Activated naive CD4-positive, alpha-beta T cell treated with anti-CD3 and anti-CD28 coated beads for 36 hours (primary cell): ENCODE measurements at regions of chr10 and their contacts with region 1.

Region 1: GRCh38 chr10:100481462-100482081 is 18.8 kb downstream of the WNT8B start:
- DNase-seq: peak; percentile 97
- H3K4me3 Mint-ChIP-seq: peak overlapping the region; percentile 73
- H3K27ac Mint-ChIP-seq: no peak overlapping the region
- H3K4me1 Mint-ChIP-seq: peaks cover 5% of the 10 kb centered on the region
- H3K27me3 Mint-ChIP-seq: peaks cover 9% of the 10 kb centered on the region

Region 2: DNA sequence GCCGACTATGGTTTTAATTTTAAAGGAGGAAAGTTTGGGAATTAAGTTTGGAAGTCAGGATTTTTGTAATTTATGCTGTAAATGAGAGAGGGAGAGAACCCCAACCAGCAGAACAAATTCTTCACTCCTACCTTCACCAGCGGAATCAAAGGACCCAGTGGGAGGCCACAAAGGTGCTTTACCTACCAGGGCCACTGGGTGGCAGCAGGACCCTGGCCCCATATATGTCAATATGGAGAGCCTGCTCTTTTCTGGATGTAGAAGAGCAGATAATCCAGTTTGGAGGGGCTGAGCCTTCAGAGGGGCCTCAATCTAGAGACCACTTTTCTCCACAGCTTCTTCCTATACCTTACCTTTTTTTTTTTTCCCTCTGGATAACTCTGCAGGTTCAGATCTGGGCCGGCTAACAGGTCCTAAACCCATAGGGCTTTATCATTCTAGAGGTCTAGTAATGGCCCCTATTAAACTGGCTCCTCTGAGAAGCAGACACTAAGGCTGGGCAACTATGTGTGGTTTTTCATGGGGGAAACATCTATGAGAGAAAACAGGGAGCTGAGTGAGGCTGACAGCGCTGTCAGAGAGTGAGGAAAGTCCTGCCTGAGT is 143.0 kb before region 1 on chr10:
- CTCF ChIA-PET with region 1: interaction called, 7 read pairs
- intact Hi-C with region 1: loop called (anchors 1 kb)
- DNase-seq: peak; percentile 91
- H3K4me3 Mint-ChIP-seq: no peak overlapping the region
- H3K27ac Mint-ChIP-seq: no peak overlapping the region
- H3K4me1 Mint-ChIP-seq: no peaks in the 10 kb centered on the region
- H3K27me3 Mint-ChIP-seq: no peaks in the 10 kb centered on the region

Region 3: GRCh38 chr10:100470367-100470766 is 11.2 kb before region 1 on chr10:
- CTCF ChIA-PET with region 1: interaction called, 20 read pairs
- intact Hi-C with region 1: no loop called
- DNase-seq: no peak
- H3K4me3 Mint-ChIP-seq: no peak overlapping the region
- H3K27ac Mint-ChIP-seq: no peak overlapping the region
- H3K4me1 Mint-ChIP-seq: no peaks in the 10 kb centered on the region
- H3K27me3 Mint-ChIP-seq: no peaks in the 10 kb centered on the region

Region 4: DNA sequence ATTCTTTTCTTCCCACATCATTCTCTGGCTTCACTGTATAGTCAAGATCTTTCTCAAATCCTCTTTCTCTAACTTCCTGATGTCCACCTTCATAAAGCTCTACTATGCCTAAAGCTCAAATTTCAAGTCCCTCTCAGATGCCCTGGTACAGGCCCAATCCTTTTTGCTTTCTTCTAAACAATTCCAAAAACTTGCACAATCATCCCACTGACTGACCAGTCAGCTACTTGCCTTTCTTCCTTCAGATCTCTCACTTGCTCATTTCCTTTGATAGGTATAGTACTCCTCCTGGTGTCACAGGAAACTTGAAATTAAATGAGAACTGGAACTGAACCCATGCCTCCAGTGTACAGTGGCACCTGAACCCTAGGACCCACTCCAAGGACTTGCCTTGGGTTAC is 19.9 kb after region 1 on chr10:
- CTCF ChIA-PET with region 1: interaction called, 25 read pairs
- intact Hi-C with region 1: no loop called
- DNase-seq: no peak
- H3K4me3 Mint-ChIP-seq: no peak overlapping the region
- H3K27ac Mint-ChIP-seq: no peak overlapping the region
- H3K4me1 Mint-ChIP-seq: peaks cover 11% of the 10 kb centered on the region
- H3K27me3 Mint-ChIP-seq: no peaks in the 10 kb centered on the region

Region 5: DNA sequence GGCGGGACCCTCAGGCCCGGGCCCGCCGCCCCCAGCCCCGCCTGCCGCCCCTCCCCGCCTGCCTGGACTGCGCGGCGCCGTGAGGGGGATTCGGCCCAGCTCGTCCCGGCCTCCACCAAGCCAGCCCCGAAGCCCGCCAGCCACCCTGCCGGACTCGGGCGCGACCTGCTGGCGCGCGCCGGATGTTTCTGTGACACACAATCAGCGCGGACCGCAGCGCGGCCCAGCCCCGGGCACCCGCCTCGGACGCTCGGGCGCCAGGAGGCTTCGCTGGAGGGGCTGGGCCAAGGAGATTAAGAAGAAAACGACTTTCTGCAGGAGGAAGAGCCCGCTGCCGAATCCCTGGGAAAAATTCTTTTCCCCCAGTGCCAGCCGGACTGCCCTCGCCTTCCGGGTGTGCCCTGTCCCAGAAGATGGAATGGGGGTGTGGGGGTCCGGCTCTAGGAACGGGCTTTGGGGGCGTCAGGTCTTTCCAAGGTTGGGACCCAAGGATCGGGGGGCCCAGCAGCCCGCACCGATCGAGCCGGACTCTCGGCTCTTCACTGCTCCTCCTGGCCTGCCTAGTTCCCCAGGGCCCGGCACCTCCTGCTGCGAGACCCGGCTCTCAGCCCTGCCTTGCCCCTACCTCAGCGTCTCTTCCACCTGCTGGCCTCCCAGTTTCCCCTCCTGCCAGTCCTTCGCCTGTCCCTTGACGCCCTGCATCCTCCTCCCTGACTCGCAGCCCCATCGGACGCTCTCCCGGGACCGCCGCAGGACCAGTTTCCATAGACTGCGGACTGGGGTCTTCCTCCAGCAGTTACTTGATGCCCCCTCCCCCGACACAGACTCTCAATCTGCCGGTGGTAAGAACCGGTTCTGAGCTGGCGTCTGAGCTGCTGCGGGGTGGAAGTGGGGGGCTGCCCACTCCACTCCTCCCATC is 346.5 kb after region 1 on chr10:
- CTCF ChIA-PET with region 1: no interaction called
- intact Hi-C with region 1: no loop called
- DNase-seq: peak; percentile 50
- H3K4me3 Mint-ChIP-seq: peak overlapping the region; percentile 66
- H3K27ac Mint-ChIP-seq: no peak overlapping the region
- H3K4me1 Mint-ChIP-seq: peaks cover 19% of the 10 kb centered on the region
- H3K27me3 Mint-ChIP-seq: peaks cover 74% of the 10 kb centered on the region